ENCODE measurements at regions of chr1 and their contacts with region 1.

Region 1: DNA sequence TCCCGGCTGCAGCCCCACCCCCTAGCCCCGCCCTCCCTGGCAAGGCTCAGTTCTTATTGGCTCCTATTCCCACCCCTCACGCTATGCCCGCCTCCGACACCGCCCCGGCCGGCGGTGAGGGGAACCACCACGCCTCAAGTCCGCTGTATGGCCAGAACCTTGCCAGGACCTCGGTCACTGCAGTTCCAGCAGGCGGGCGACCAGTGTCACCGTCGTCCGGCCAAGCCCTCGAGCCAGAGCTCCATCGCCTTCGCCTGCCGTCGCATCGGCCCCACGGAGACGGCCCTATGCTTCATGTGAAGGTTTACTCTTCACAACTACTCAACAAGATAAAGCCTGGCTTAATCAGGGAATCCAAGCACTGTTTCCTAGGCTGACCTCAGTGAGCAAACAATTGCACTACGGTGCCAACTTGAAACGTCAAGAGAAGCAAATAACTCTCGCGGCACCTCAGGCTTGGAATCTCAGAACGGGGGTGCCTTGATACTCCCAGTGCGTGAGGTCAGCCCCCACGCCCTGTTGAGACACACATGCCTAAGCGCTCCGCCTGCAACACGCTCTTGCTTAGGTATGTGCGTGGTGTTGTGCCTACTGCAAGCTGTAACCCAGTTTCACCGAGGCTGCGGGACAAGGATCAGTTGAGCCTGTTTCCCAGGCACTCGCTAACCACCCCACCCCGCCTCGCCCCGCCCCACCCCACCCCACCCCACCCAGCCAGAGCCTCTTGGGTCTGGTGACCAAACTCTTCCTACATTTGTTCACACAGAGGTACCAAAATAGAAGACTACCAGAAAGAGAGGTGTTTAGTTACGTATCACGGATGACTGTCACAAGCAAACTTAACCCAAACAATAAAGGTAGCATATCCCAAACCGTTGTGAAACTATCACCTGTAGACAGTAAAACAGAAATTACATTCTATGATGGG is 498 bp upstream of the DENND2C start:
- DNase-seq: peak; percentile 97

Region 2: GRCh38 chr1:114715952-114716303 is 45.6 kb after region 1 on chr1:
- intact Hi-C with region 1: no loop called
- DNase-seq: no peak

Region 3: GRCh38 chr1:114749835-114750234 is 79.5 kb after region 1 on chr1:
- intact Hi-C with region 1: loop called in 1 of 2 experiments (anchors 2 kb)
- DNase-seq: no peak

Measured in posterior vena cava (tissue), 2 donors.